ENCODE measurements at regions of chr11 and their contacts with region 1.

Region 1: GRCh38 chr11:85854557-85855340 is 434 bp upstream of the CCDC83 start:
- DNase-seq: peak; percentile 89
- H3K4me3 ChIP-seq: peak overlapping the region; percentile 24 to 61 (median 49)
- H3K27ac ChIP-seq: peak overlapping the region; percentile 8
- H3K4me1 ChIP-seq: peaks cover 10% of the 10 kb centered on the region
- H3K27me3 ChIP-seq: no peaks in the 10 kb centered on the region
- CTCF ChIP-seq: peak; percentile 24 to 80

Region 2: DNA sequence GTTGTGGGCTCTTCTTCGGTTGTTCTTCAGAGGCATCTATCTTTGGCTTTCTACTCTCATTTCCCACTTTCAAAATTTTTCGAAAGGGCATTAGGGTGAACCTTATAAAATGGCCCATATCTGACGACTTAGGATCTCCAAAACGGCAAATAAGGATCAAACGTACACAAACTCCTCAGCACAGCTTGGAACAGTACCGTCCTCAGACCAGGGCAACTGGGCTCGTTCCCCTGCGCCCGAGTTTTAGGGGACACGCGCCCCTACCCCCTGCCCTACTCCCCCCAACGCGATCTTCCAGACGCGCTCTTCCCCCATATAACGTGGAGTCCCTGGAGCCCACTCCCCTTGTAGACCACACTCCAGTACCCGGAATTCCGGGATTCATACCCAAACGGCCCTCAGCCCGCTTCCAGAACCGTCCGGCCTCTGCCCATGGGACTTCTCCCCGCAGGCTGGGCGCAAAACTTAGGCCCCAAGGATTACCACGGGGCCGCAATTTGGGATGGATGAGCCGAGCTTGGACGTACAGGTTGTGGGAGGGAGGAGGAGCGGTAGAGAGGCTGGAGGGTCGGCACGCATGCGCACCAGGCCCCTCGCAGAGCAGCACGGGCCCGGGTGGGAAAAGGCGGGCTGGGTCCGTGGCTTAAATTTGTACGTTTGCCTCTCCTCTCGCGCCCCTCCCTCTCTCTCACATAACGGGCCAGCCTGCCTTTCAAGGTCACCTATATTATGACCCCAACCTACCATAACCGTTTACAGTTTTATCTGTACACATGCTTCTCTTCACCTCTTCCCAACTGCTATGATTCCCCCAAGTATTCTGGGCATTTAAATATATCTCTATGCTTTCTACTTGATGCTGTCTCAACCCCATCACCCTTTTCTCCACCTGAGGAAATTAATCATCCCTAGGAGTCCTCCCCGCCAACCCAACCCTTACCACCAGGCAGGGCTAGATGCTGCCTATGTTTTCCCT is 172.1 kb before region 1 on chr11:
- CTCF ChIA-PET with region 1: no interaction called
- dilution Hi-C with region 1: no loop called
- in situ Hi-C with region 1: no loop called
- intact Hi-C with region 1: no loop called
- DNase-seq: no peak
- H3K4me3 ChIP-seq: peak overlapping the region in 2 of 3 experiments; percentile 24 to 48
- H3K27ac ChIP-seq: no peak overlapping the region
- H3K4me1 ChIP-seq: no peaks in the 10 kb centered on the region
- H3K27me3 ChIP-seq: no peaks in the 10 kb centered on the region
- CTCF ChIP-seq: no peak

Region 3: GRCh38 chr11:85791409-85791990 is 63.2 kb before region 1 on chr11:
- CTCF ChIA-PET with region 1: no interaction called
- dilution Hi-C with region 1: no loop called
- in situ Hi-C with region 1: no loop called
- intact Hi-C with region 1: no loop called
- DNase-seq: no peak
- H3K4me3 ChIP-seq: no peak overlapping the region
- H3K27ac ChIP-seq: no peak overlapping the region
- H3K4me1 ChIP-seq: no peaks in the 10 kb centered on the region
- H3K27me3 ChIP-seq: no peaks in the 10 kb centered on the region
- CTCF ChIP-seq: no peak

Region 4: GRCh38 chr11:85941380-85941973 is 86.7 kb after region 1 on chr11:
- CTCF ChIA-PET with region 1: no interaction called
- dilution Hi-C with region 1: no loop called
- in situ Hi-C with region 1: no loop called
- intact Hi-C with region 1: loop called (anchors 1 kb)
- DNase-seq: peak; percentile 46
- H3K4me3 ChIP-seq: no peak overlapping the region
- H3K27ac ChIP-seq: no peak overlapping the region
- H3K4me1 ChIP-seq: peaks cover 4% of the 10 kb centered on the region
- H3K27me3 ChIP-seq: no peaks in the 10 kb centered on the region
- CTCF ChIP-seq: peak; percentile 57 to 78

Region 5: GRCh38 chr11:86041975-86042378 is 187.2 kb after region 1 on chr11:
- CTCF ChIA-PET with region 1: no interaction called
- dilution Hi-C with region 1: no loop called
- in situ Hi-C with region 1: no loop called
- intact Hi-C with region 1: loop called (anchors 10 kb)
- DNase-seq: peak; percentile 76
- H3K4me3 ChIP-seq: peak overlapping the region in 1 of 3 experiments; percentile 50
- H3K27ac ChIP-seq: peak overlapping the region; percentile 61
- H3K4me1 ChIP-seq: peaks cover 32% of the 10 kb centered on the region
- H3K27me3 ChIP-seq: no peaks in the 10 kb centered on the region
- CTCF ChIP-seq: peak; percentile 82 to 86

Region 6: GRCh38 chr11:86218125-86219084 is 363.7 kb after region 1 on chr11:
- CTCF ChIA-PET with region 1: no interaction called
- dilution Hi-C with region 1: no loop called
- in situ Hi-C with region 1: no loop called
- intact Hi-C with region 1: loop called (anchors 2 kb)
- DNase-seq: peak; percentile 55
- H3K4me3 ChIP-seq: peak overlapping the region in 1 of 3 experiments; percentile 4
- H3K27ac ChIP-seq: no peak overlapping the region
- H3K4me1 ChIP-seq: no peaks in the 10 kb centered on the region
- H3K27me3 ChIP-seq: no peaks in the 10 kb centered on the region
- CTCF ChIP-seq: peak; percentile 92 to 95

Region 7: DNA sequence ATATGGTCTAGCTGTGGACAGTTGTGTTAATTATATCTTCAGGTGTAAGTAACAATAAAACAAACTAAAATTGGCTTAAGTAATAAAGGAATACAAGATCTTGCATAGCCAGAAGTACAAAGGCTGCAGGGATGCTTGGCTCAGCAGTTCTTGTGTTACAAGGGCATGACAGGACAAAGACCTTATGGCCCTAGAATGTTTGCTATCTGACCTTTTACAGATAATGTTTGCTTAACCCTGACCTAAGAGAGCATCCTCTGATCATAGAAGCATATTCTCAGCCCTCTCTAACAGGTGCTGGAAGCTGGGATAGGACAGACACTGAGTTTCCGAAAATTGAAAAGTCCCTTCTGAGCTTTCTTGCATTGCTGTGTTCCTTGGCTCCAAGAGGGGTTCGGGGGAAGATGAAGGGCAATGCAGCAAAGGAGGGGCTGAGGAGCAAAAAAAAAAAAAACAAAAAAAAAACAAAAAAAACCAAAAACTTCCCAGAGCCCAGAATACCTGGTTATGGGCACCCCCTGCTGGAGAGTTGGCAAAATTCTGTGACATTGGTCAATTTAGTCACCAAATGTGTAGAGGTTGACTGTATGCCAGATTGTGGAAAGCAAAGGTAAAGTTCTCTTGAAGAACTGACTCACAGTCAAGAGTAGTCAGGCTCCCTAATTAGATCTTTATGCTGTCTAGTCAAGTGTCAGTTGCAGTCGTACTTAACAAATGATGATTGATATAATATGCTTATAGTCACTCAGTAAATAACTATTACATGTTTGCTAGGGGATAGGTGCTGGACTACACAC is 436.9 kb after region 1 on chr11:
- CTCF ChIA-PET with region 1: no interaction called
- dilution Hi-C with region 1: no loop called
- in situ Hi-C with region 1: no loop called
- intact Hi-C with region 1: loop called (anchors 1 kb)
- DNase-seq: peak; percentile 70
- H3K4me3 ChIP-seq: no peak overlapping the region
- H3K27ac ChIP-seq: no peak overlapping the region
- H3K4me1 ChIP-seq: no peaks in the 10 kb centered on the region
- H3K27me3 ChIP-seq: no peaks in the 10 kb centered on the region
- CTCF ChIP-seq: peak; percentile 71 to 79

Region 8: GRCh38 chr11:86408845-86409244 is 554.1 kb after region 1 on chr11:
- CTCF ChIA-PET with region 1: no interaction called
- dilution Hi-C with region 1: no loop called
- in situ Hi-C with region 1: no loop called
- intact Hi-C with region 1: loop called (anchors 2 kb)
- DNase-seq: no peak
- H3K4me3 ChIP-seq: no peak overlapping the region
- H3K27ac ChIP-seq: no peak overlapping the region
- H3K4me1 ChIP-seq: peaks cover 5% of the 10 kb centered on the region
- H3K27me3 ChIP-seq: no peaks in the 10 kb centered on the region
- CTCF ChIP-seq: peak; percentile 26 to 43